ENCODE measurements at regions of chr11 and their contacts with region 1.

Region 1: GRCh38 chr11:113553235-113553634 is 78.0 kb upstream of the DRD2 start:
- DNase-seq: no peak
- ATAC-seq: no peak
- H3K4me3 ChIP-seq: no peak overlapping the region
- H3K4me3 Mint-ChIP-seq: no peak overlapping the region
- H3K27ac ChIP-seq: no peak overlapping the region
- H3K27ac Mint-ChIP-seq: no peak overlapping the region
- H3K4me1 ChIP-seq: no peaks in the 10 kb centered on the region
- H3K4me1 Mint-ChIP-seq: no peaks in the 10 kb centered on the region
- H3K27me3 ChIP-seq: no peaks in the 10 kb centered on the region
- H3K27me3 Mint-ChIP-seq: peaks cover 21 to 38% (median 26%) of the 10 kb centered on the region in 5 donors

Region 2: DNA sequence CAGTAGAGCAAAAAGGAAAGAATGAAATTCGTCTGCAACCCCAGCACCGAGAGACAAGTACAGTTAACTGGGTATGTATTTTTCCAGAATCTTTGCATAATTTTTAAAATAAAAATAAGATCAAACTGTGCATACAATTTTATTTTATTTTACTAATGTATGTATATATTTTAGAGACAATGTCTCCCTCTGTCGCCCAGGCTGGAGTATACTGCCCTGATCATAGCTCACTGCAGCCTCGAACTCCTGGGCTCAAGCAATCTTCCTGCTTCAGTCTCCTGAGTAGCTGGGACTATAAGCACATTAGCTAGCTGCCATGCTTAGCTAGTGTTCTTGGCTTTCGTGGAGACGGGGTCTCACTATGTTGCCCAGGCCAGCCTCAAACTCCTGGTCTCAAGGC is 59.2 kb before region 1 on chr11:
- CTCF ChIA-PET with region 1: no interaction called
- POLR2A ChIA-PET with region 1: no interaction called
- intact Hi-C with region 1: loop called in 1 of 2 experiments (anchors 10 kb)
- DNase-seq: no peak
- ATAC-seq: no peak
- H3K4me3 ChIP-seq: no peak overlapping the region
- H3K4me3 Mint-ChIP-seq: no peak overlapping the region
- H3K27ac ChIP-seq: no peak overlapping the region
- H3K27ac Mint-ChIP-seq: no peak overlapping the region
- H3K4me1 ChIP-seq: no peaks in the 10 kb centered on the region
- H3K4me1 Mint-ChIP-seq: no peaks in the 10 kb centered on the region
- H3K27me3 ChIP-seq: no peaks in the 10 kb centered on the region
- H3K27me3 Mint-ChIP-seq: peaks cover 7 to 25% (median 23%) of the 10 kb centered on the region in 5 donors

Region 3: GRCh38 chr11:113532697-113533424 is 20.4 kb before region 1 on chr11:
- CTCF ChIA-PET with region 1: no interaction called
- POLR2A ChIA-PET with region 1: no interaction called
- intact Hi-C with region 1: no loop called
- DNase-seq: peak in 8 of 9 donors; percentile 18 to 56 (median 34)
- ATAC-seq: peak; percentile 72
- H3K4me3 ChIP-seq: no peak overlapping the region
- H3K4me3 Mint-ChIP-seq: no peak overlapping the region
- H3K27ac ChIP-seq: no peak overlapping the region
- H3K27ac Mint-ChIP-seq: no peak overlapping the region
- H3K4me1 ChIP-seq: no peaks in the 10 kb centered on the region
- H3K4me1 Mint-ChIP-seq: no peaks in the 10 kb centered on the region
- H3K27me3 ChIP-seq: no peaks in the 10 kb centered on the region
- H3K27me3 Mint-ChIP-seq: peaks cover 18 to 42% (median 29%) of the 10 kb centered on the region in 5 donors

Measured in naive thymus-derived CD4-positive, alpha-beta T cell (primary cell).